Right ventricle myocardium inferior (tissue), 1 donor: ENCODE measurements at regions of chr5 and their contacts with region 1.

Region 1: GRCh38 chr5:40755407-40756365 is at the start of gene TTC33:
- DNase-seq: peak; percentile 99
- ATAC-seq: peak; percentile 99
- total RNA-seq, gene TTC33: 19.3 TPM

Region 2: GRCh38 chr5:40798012-40798855 is 42.5 kb after region 1 on chr5 and contains the start of gene PRKAA1:
- intact Hi-C with region 1: loop called (anchors 1 kb)
- DNase-seq: peak; percentile 94
- ATAC-seq: peak; percentile 95
- total RNA-seq, gene PRKAA1: 33.6 TPM

Region 3: DNA sequence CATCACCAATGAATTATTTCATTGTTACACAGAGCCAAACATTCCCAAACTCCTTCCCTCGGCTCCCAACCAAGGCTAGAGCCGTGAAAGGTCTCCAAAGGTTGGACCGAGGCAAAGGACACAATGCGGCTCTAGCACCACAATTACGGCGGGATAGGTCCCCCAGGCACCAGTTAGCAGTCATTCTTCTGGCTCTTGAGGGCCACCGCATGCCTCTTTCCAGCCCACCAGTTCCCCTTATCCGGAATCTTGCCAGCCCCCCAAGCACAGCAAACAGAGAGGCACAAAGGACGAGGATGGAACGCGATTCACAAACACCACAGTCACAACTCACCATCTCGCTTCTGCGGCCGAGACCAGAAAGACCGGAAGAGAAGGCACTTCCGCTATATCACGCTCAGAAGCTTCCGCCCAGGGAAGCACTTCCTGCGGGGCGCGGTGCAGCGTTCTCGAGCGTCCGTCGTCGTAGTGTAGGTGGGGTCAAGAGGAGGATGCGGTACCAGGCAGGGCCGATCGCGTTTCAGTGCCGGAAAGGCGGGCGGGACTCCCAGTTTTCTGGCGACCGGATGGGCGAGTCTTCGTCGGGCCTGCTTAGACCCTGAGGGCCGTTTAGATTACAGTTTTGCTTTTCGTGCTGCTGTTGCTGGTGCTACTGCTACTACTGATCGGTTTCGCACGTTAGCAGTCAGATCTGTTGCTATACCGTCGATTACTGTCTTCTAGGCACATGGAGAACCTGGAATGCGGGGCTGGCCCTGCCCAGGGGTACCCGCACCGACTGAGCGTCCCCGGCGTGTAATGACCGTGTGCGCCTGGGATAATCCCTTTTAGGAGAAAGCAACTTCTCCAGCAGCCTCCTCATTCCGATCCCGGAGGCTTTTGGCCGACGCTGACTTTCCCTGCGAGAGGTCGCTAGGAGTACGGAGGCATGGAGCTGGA is 79.4 kb after region 1 on chr5 and contains the start of gene RPL37:
- intact Hi-C with region 1: loop called (anchors 2 kb)
- DNase-seq: peak; percentile 97
- ATAC-seq: peak; percentile 100
- total RNA-seq, gene RPL37: 693 TPM

Region 4: GRCh38 chr5:40879163-40879942 is 123.7 kb after region 1 on chr5:
- intact Hi-C with region 1: loop called (anchors 2 kb)
- DNase-seq: no peak
- ATAC-seq: no peak

Region 5: DNA sequence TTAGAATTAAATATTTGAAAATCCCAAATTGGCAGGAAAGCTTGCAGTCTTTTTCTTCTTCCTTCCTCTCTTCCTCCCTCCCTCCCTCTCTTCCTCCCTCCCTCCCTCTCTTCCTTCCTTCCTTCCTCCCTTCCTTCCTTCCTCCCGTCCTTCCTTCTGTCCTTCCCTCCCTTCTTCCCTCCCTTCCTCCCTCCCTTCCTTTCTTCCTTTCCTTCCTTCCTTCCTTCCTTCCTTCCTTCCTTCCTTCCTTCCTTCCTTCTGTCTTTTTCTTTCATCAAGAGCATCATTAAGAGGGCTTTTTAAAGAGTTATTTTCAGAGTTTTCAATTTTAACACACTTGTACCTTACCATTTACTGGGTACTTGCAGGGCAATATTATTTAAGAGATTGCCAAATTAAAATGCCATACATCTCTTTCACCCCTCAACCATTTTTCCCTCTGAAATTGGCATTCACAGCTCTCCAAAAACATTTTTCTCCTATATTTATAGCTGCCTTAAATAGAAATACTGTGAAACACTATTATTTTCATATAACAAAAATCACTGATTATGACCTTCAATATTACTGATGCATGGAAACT is 556.9 kb after region 1 on chr5:
- intact Hi-C with region 1: no loop called
- DNase-seq: no peak
- ATAC-seq: no peak